Heart left ventricle (tissue), 16 donors: ENCODE measurements at regions of chr3 and their contacts with region 1.

Region 1: GRCh38 chr3:130621824-130622223 is 104.8 kb downstream of the COL6A6 start:
- DNase-seq: no peak
- ATAC-seq: peak; percentile 30 to 86 (median 45)
- H3K4me3 ChIP-seq: no peak overlapping the region
- H3K27ac ChIP-seq: no peak overlapping the region
- H3K4me1 ChIP-seq: no peaks in the 10 kb centered on the region
- H3K27me3 ChIP-seq: no peaks in the 10 kb centered on the region
- CTCF ChIP-seq: no peak
- POLR2A ChIP-seq: no peak

Region 2: DNA sequence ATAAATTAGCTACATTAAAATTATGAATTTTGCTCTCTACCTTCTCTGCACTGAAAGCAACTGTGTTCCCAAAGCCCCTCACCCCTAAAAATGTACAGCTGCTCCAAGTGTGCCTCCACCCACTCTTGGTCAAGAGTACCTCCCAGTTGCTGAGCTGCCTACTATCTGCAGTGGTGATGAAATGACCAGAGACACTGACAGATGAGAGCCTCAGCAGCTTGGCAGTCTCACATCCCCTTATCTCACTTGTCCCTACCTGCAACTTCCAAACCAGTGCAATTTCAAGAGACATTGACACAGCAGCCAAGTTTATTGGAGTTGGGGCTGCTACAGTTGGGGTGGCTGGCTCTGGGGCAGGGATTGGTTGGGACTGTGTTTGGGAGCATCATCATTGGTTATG is 328.6 kb before region 1 on chr3:
- intact Hi-C with region 1: loop called in 1 of 10 experiments (anchors 5 kb)
- DNase-seq: no peak
- ATAC-seq: no peak
- H3K4me3 ChIP-seq: no peak overlapping the region
- H3K27ac ChIP-seq: no peak overlapping the region
- H3K4me1 ChIP-seq: no peaks in the 10 kb centered on the region
- H3K27me3 ChIP-seq: peaks cover 0 to 14% (median 0%) of the 10 kb centered on the region in 9 donors
- CTCF ChIP-seq: no peak
- POLR2A ChIP-seq: no peak